ENCODE measurements at regions of chr4 and their contacts with region 1.

Region 1: GRCh38 chr4:14607578-14607977 is 394.7 kb upstream of the CPEB2 start:
- DNase-seq: no peak
- H3K4me3 ChIP-seq: no peak overlapping the region
- H3K27ac ChIP-seq: no peak overlapping the region
- H3K4me1 ChIP-seq: no peaks in the 10 kb centered on the region
- H3K27me3 ChIP-seq: no peaks in the 10 kb centered on the region
- CTCF ChIP-seq: no peak

Region 2: GRCh38 chr4:14504162-14504561 is 103.4 kb before region 1 on chr4:
- CTCF ChIA-PET with region 1: no interaction called
- POLR2A ChIA-PET with region 1: no interaction called
- intact Hi-C with region 1: no loop called
- DNase-seq: no peak
- H3K4me3 ChIP-seq: no peak overlapping the region
- H3K27ac ChIP-seq: no peak overlapping the region
- H3K4me1 ChIP-seq: no peaks in the 10 kb centered on the region
- H3K27me3 ChIP-seq: no peaks in the 10 kb centered on the region
- CTCF ChIP-seq: no peak

Region 3: DNA sequence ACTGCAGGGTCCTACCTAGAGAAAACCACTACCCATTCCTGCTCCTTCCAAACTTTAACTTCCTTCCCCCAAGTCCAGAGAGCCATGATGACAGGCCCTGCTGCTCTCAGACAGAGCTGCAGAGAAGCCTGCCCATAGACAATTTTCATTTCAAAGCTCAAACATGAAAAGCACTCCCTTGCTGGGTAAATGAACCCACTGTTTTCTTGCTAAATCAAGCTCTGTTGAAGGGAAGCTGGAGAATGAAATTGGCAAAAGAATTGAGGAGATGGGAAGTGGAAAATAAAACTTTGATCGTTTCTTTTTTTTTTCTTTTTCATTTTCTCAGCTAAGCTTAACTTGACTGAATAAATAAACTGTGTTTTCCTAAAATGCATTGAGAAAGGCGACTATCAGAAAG is 63.6 kb after region 1 on chr4:
- CTCF ChIA-PET with region 1: interaction called, 15 read pairs
- POLR2A ChIA-PET with region 1: no interaction called
- intact Hi-C with region 1: no loop called
- DNase-seq: no peak
- H3K4me3 ChIP-seq: no peak overlapping the region
- H3K27ac ChIP-seq: no peak overlapping the region
- H3K4me1 ChIP-seq: peaks cover 6% of the 10 kb centered on the region; the same call in 1 of the 2 replicates
- H3K27me3 ChIP-seq: no peaks in the 10 kb centered on the region
- CTCF ChIP-seq: no peak

Measured in PC-9 (cell line).